Right cardiac atrium (tissue), 5 donors: ENCODE measurements at regions of chr12 and their contacts with region 1.

Region 1: DNA sequence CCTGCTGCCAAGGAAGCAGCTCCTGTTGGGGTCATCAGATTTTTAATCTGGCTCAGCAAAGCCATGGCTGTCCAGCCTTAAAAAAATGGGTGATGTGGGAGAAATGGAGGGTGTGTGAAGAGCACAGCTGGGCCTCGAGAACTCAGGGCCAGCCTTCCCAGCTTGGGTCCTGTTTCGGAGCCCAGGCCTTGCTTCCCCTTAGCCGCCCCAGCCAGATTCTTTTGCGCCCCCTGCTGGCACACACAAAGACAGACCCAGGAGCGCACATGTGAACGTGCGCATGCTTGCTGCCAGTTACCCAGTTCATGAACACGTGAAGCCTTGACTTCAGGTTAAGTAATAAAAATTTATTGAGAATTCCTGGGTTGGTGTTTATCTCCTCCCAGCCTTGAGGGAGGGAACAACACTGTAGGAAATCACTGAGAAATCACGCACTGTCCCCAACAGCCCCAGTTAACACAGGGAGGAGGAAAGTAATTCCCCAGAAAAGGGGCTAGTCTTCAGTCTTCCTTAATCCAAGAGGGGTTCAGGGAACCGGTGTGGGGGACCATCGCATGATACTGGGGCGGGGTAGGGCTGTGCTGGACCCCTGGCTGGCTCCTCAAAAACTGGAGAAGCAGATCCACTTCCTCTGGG is 5.3 kb downstream of the PHB2 start:
- DNase-seq: peak; percentile 87 to 93 (median 91)
- ATAC-seq: peak; percentile 65 to 66
- H3K4me3 ChIP-seq: no peak overlapping the region
- H3K27ac ChIP-seq: peak overlapping the region; percentile 59
- H3K4me1 ChIP-seq: peaks cover 7% of the 10 kb centered on the region
- H3K27me3 ChIP-seq: no peaks in the 10 kb centered on the region

Region 2: DNA sequence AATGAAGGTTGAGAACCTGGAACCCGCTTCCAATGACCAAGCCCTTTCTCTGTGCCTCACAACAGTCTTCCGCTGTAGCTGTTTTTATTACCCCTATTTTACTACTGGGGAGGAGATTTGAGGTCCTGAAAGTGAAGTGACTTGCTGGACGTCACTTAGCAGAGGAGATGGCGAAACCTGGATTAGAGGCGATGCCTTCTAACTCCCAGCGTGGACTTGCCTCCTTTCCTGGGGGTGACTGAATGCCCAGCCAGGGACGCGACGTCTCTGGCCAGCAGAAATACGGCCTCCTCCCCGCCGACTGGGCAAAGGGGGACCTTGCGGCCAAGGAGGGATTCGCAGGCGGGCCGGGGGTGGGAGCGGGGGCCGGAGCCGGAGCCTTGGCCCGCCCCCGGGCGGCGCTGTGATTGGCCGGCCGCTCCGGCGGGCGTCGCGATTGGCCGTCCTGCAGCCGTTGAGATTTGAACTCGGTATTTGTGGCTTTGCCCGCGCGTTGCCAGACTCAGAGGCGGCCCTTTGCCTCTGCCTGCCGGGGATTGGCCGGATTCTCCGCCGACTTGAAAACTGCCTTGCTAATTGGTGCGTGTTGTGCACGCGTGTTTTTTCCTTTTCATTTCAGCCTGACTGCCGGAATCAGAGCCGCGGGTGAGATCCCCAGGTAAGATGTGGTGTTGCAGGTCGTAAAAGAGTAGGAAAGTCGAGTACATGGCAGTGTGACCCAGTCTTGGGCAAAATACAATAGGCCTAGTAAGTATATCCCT is 471.5 kb before region 1 on chr12 and contains the start of gene NCAPD2:
- intact Hi-C with region 1: no loop called
- DNase-seq: peak; percentile 96 to 98 (median 97)
- ATAC-seq: peak; percentile 97 to 98
- H3K4me3 ChIP-seq: peak within 1 kb of the TSS; percentile 71
- H3K27ac ChIP-seq: peak within 1 kb of the TSS; percentile 82
- H3K4me1 ChIP-seq: no peaks in the 10 kb centered on the region
- H3K27me3 ChIP-seq: no peaks in the 10 kb centered on the region
- total RNA-seq, gene NCAPD2: 13.5 to 16.8 (median 14.6) TPM

Region 3: GRCh38 chr12:6866163-6866919 is 98.8 kb before region 1 on chr12:
- intact Hi-C with region 1: no loop called
- DNase-seq: peak; percentile 42 to 76 (median 65)
- ATAC-seq: no peak
- H3K4me3 ChIP-seq: no peak overlapping the region
- H3K27ac ChIP-seq: peak overlapping the region; percentile 88
- H3K4me1 ChIP-seq: peaks cover 2% of the 10 kb centered on the region
- H3K27me3 ChIP-seq: no peaks in the 10 kb centered on the region

Region 4: DNA sequence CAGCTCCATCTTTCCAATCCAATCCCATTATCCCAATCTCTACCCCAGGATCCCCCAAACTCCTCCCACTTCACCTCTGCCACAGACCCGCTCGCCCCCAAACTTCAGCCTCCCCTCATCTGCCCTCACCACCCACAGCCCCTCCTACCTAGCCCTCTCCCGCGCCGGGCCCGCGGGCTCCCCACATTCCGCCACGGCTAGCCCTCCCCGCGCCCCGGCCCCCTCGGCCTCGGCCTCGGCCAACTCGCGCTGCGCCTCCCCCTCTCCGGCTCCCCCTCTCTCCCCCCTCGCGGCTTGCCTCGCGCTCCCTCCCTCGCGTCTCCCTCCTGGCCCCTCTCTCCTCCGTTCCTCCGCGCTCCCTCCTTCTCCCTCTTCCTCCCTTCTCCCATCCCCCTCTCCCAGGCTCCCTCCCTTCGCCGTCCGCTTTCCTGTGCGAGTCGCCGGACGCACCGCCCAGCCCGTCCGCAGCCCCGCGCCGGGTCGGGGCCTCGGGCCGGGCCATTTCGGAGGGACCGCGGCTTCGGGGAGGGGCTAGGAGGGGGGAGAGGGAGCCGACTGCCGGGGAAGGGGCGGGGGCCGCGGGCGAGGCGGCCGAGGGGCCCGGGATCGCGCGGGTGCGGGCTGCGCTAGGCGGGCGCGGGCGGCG is 37.6 kb before region 1 on chr12 and contains the start of gene ATN1:
- intact Hi-C with region 1: loop called in 1 of 4 experiments (anchors 2 kb)
- DNase-seq: peak; percentile 87 to 95 (median 93)
- ATAC-seq: peak; percentile 56 to 70
- H3K4me3 ChIP-seq: peak within 1 kb of the TSS; percentile 99
- H3K27ac ChIP-seq: peak within 1 kb of the TSS; percentile 100
- H3K4me1 ChIP-seq: peaks cover 18% of the 10 kb centered on the region
- H3K27me3 ChIP-seq: no peaks in the 10 kb centered on the region
- total RNA-seq, gene ATN1: 85.3 to 89.3 (median 88.6) TPM

Region 5: GRCh38 chr12:6944381-6945186 is 20.6 kb before region 1 on chr12:
- intact Hi-C with region 1: loop called in 1 of 4 experiments (anchors 2 kb)
- DNase-seq: peak; percentile 93 to 97 (median 97)
- ATAC-seq: peak; percentile 78 to 79
- H3K4me3 ChIP-seq: peak overlapping the region; percentile 35
- H3K27ac ChIP-seq: peak overlapping the region; percentile 96
- H3K4me1 ChIP-seq: no peaks in the 10 kb centered on the region
- H3K27me3 ChIP-seq: no peaks in the 10 kb centered on the region

Region 6: DNA sequence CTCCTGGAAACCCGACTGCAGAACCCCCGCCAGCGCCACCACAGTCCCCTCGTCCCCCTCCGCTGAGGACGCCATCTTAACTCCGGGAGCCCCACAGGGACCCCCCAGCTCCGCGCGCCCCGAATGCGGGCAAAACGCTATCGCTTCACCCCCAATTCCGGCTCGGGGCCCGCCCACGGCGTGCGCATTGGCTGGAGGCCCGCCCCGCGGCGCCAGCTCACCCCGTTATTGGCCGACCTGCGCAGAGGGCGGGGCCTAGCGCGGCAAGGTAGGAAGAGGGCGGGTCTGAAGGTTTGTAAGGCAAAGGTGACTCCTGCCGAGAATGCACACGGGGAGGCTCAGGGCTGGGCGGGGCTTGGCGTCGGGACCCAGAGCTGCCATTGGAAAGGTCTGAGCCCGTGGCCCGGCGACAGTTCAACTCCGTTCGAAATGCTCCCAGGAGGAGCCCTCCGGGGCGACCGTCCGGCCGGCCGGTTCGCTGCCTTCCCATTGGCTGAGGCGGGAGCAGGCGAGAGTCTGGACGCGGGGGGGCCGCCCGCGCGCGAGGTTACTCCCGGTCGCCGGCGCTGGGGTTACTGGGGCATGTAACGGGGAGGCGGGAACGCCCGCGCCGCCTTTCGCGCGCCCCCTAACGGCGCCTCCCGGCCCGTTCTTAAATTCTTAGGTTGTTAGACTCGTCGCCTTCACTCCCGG is 53.4 kb after region 1 on chr12 and contains the start of gene LPCAT3:
- intact Hi-C with region 1: loop called in 1 of 4 experiments (anchors 5 kb)
- DNase-seq: peak; percentile 98 to 99 (median 99)
- ATAC-seq: peak; percentile 98
- H3K4me3 ChIP-seq: peak within 1 kb of the TSS; percentile 50
- H3K27ac ChIP-seq: peak within 1 kb of the TSS; percentile 93
- H3K4me1 ChIP-seq: no peaks in the 10 kb centered on the region
- H3K27me3 ChIP-seq: no peaks in the 10 kb centered on the region
- total RNA-seq, gene LPCAT3: 14.0 to 22.2 (median 19.2) TPM